Panc1 (cell line): ENCODE measurements at regions of chr19 and their contacts with region 1.

Region 1: GRCh38 chr19:33887891-33888290 is 91.2 kb downstream of the KCTD15 start:
- DNase-seq: no peak
- ATAC-seq: peak; percentile 14; the same call in 1 of the 2 replicates
- H3K4me3 ChIP-seq: no peak overlapping the region
- H3K27ac ChIP-seq: no peak overlapping the region
- H3K4me1 ChIP-seq: no peaks in the 10 kb centered on the region
- H3K27me3 ChIP-seq: no peaks in the 10 kb centered on the region
- CTCF ChIP-seq: no peak

Region 2: GRCh38 chr19:33785795-33786194 is 102.1 kb before region 1 on chr19:
- CTCF ChIA-PET with region 1: no interaction called
- POLR2A ChIA-PET with region 1: no interaction called
- in situ Hi-C with region 1: no loop called
- intact Hi-C with region 1: no loop called
- DNase-seq: no peak
- ATAC-seq: no peak
- H3K4me3 ChIP-seq: no peak overlapping the region
- H3K27ac ChIP-seq: no peak overlapping the region
- H3K4me1 ChIP-seq: no peaks in the 10 kb centered on the region
- H3K27me3 ChIP-seq: peaks cover 3% of the 10 kb centered on the region
- CTCF ChIP-seq: no peak

Region 3: GRCh38 chr19:33914599-33914998 is 26.7 kb after region 1 on chr19:
- CTCF ChIA-PET with region 1: no interaction called
- POLR2A ChIA-PET with region 1: no interaction called
- in situ Hi-C with region 1: no loop called
- intact Hi-C with region 1: no loop called
- DNase-seq: no peak
- ATAC-seq: no peak
- H3K4me3 ChIP-seq: no peak overlapping the region
- H3K27ac ChIP-seq: no peak overlapping the region
- H3K4me1 ChIP-seq: no peaks in the 10 kb centered on the region
- H3K27me3 ChIP-seq: no peaks in the 10 kb centered on the region
- CTCF ChIP-seq: no peak

Region 4: GRCh38 chr19:33946535-33947264 is 58.8 kb after region 1 on chr19:
- CTCF ChIA-PET with region 1: no interaction called
- POLR2A ChIA-PET with region 1: interaction called, 14 read pairs
- in situ Hi-C with region 1: no loop called
- intact Hi-C with region 1: no loop called
- DNase-seq: no peak
- ATAC-seq: no peak
- H3K4me3 ChIP-seq: no peak overlapping the region
- H3K27ac ChIP-seq: no peak overlapping the region
- H3K4me1 ChIP-seq: no peaks in the 10 kb centered on the region
- H3K27me3 ChIP-seq: no peaks in the 10 kb centered on the region; the same call in 1 of the 2 replicates
- CTCF ChIP-seq: no peak